Activated CD8-positive, alpha-beta T cell treated with anti-CD3 and anti-CD28 coated beads, Interleukin-2, amount 10 ng/mL, durations not matched to agents 7 days and 5 days (primary cell): ENCODE measurements at regions of chr19 and their contacts with region 1.

Region 1: GRCh38 chr19:43562698-43563241 is 12.6 kb downstream of the XRCC1 start:
- DNase-seq: peak; percentile 87
- ATAC-seq: peak; percentile 92
- H3K4me3 Mint-ChIP-seq: peak overlapping the region; percentile 46
- H3K27ac Mint-ChIP-seq: peak overlapping the region; percentile 97
- H3K4me1 Mint-ChIP-seq: peaks cover 43% of the 10 kb centered on the region
- H3K27me3 Mint-ChIP-seq: no peaks in the 10 kb centered on the region

Region 2: GRCh38 chr19:43532962-43533545 is 29.7 kb before region 1 on chr19 and contains the start of gene ZNF575:
- CTCF ChIA-PET with region 1: interaction called, 13 read pairs
- POLR2A ChIA-PET with region 1: no interaction called
- DNase-seq: peak; percentile 91
- ATAC-seq: peak; percentile 66
- H3K4me3 Mint-ChIP-seq: peak within 1 kb of the TSS; percentile 87
- H3K27ac Mint-ChIP-seq: peak within 1 kb of the TSS; percentile 98
- H3K4me1 Mint-ChIP-seq: peaks cover 27% of the 10 kb centered on the region
- H3K27me3 Mint-ChIP-seq: no peaks in the 10 kb centered on the region
- total RNA-seq, gene ZNF575: 3.4 to 3.7 TPM

Region 3: DNA sequence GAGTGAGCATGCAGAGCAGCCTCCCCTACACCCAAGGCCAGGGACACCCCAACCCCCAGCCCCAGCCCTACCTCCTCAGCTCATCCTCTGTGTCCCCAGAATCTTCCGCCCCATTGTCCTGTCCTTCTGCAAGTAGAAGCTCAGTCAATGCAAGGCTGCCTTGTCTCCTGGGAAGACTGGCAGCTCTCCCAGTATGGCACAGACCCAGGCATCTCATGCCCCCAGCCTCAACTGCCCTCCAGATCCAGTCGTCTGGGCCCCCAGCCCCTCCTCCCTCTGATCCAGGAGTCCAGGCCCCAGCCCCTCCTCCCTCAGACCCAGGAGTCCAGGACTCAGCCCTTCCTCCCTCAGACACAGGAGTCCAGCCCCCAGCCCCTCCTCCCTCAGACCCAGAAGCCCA is 16.8 kb before region 1 on chr19:
- CTCF ChIA-PET with region 1: no interaction called
- POLR2A ChIA-PET with region 1: no interaction called
- DNase-seq: no peak
- ATAC-seq: no peak
- H3K4me3 Mint-ChIP-seq: no peak overlapping the region
- H3K27ac Mint-ChIP-seq: no peak overlapping the region
- H3K4me1 Mint-ChIP-seq: no peaks in the 10 kb centered on the region
- H3K27me3 Mint-ChIP-seq: no peaks in the 10 kb centered on the region

Region 4: DNA sequence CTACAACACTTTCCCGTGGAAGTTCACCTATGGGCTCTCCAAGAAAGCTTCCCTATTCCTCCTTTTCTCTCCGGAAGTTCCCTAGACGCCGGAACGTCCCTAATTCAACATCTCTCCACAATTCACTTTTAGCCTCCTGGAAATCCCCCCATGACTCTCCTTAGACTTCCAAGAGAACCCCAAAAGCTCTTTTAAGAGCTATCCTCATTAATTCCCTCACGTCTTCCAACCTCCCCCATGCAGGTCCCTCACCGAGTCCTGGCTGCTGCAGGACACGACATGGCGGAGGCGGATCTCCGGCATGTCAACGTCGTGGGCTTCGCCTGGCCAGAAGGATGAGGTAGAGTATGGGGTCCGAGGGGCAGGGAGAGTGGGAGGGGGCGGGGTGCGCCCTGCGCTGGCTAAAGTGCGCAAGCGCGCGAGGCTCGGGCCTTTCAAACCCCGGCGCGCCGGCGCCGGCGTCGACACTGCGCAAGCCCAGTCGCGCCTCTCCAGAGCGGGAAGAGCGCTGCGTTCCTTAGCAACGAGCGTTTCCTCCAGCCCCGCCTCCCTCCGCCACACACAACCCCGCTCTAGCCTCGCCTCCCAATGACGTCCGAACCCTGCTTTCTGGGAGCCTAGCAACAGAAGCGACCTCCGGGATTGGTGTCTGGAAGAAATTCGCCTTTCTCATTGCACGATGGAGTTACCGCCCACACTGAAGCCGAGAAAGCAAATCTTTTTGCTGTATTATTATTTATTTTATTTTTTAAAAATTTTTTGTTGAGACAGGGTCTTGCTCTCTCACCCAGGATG is 12.6 kb after region 1 on chr19 and contains the starts of genes PINLYP and XRCC1:
- CTCF ChIA-PET with region 1: interaction called, 11 read pairs
- POLR2A ChIA-PET with region 1: interaction called, 4 read pairs
- DNase-seq: peak; percentile 99
- ATAC-seq: peak; percentile 96
- H3K4me3 Mint-ChIP-seq: peak within 1 kb of the TSS; percentile 96
- H3K27ac Mint-ChIP-seq: peak within 1 kb of the TSS; percentile 93
- H3K4me1 Mint-ChIP-seq: peaks cover 45% of the 10 kb centered on the region
- H3K27me3 Mint-ChIP-seq: no peaks in the 10 kb centered on the region
- total RNA-seq, gene PINLYP: 7.4 to 8.9 TPM
- total RNA-seq, gene XRCC1: 46.5 to 48.4 TPM

Region 5: GRCh38 chr19:43606569-43607229 is 43.9 kb after region 1 on chr19:
- CTCF ChIA-PET with region 1: no interaction called
- POLR2A ChIA-PET with region 1: no interaction called
- DNase-seq: no peak
- ATAC-seq: no peak
- H3K4me3 Mint-ChIP-seq: no peak overlapping the region
- H3K27ac Mint-ChIP-seq: peak overlapping the region; percentile 60
- H3K4me1 Mint-ChIP-seq: peaks cover 9% of the 10 kb centered on the region
- H3K27me3 Mint-ChIP-seq: no peaks in the 10 kb centered on the region

Region 6: GRCh38 chr19:43634872-43635560 is 72.2 kb after region 1 on chr19:
- CTCF ChIA-PET with region 1: no interaction called
- POLR2A ChIA-PET with region 1: no interaction called
- DNase-seq: no peak
- ATAC-seq: no peak
- H3K4me3 Mint-ChIP-seq: no peak overlapping the region
- H3K27ac Mint-ChIP-seq: no peak overlapping the region
- H3K4me1 Mint-ChIP-seq: peaks cover 9% of the 10 kb centered on the region
- H3K27me3 Mint-ChIP-seq: peaks cover 29% of the 10 kb centered on the region